Common myeloid progenitor, CD34-positive (primary cell): ENCODE measurements at regions of chr2 and their contacts with region 1.

Region 1: GRCh38 chr2:20411361-20411894 is 35.4 kb upstream of the RHOB start:
- DNase-seq: peak; percentile 64 to 84 (median 79)
- H3K4me3 ChIP-seq: no peak overlapping the region
- H3K27ac ChIP-seq: no peak overlapping the region
- H3K4me1 ChIP-seq: peaks cover 0 to 12% (median 10%) of the 10 kb centered on the region in 4 experiments
- H3K27me3 ChIP-seq: no peaks in the 10 kb centered on the region

Region 2: DNA sequence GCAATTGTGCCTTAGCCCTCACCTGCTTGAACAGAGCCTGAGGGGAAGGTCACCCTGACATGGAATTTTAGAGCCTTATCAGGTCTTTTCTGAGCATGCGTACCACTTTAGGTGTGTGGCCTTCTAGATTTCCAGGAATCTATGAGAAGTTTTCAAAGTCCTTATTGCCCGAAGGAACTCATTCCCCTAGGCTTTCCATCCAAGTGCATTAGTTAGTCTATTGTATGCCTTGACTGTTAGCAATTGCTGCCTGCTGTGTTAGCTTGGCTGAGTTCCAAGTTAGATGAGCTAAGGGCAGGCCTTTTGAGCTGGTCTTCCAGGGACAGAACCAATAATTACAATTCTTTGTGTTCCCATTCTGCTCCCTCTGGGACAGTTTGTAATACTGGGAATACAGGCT is 30.0 kb before region 1 on chr2:
- CTCF ChIA-PET with region 1: interaction called, 11 read pairs
- POLR2A ChIA-PET with region 1: no interaction called
- DNase-seq: no peak
- H3K4me3 ChIP-seq: no peak overlapping the region
- H3K27ac ChIP-seq: no peak overlapping the region
- H3K4me1 ChIP-seq: no peaks in the 10 kb centered on the region
- H3K27me3 ChIP-seq: no peaks in the 10 kb centered on the region

Region 3: DNA sequence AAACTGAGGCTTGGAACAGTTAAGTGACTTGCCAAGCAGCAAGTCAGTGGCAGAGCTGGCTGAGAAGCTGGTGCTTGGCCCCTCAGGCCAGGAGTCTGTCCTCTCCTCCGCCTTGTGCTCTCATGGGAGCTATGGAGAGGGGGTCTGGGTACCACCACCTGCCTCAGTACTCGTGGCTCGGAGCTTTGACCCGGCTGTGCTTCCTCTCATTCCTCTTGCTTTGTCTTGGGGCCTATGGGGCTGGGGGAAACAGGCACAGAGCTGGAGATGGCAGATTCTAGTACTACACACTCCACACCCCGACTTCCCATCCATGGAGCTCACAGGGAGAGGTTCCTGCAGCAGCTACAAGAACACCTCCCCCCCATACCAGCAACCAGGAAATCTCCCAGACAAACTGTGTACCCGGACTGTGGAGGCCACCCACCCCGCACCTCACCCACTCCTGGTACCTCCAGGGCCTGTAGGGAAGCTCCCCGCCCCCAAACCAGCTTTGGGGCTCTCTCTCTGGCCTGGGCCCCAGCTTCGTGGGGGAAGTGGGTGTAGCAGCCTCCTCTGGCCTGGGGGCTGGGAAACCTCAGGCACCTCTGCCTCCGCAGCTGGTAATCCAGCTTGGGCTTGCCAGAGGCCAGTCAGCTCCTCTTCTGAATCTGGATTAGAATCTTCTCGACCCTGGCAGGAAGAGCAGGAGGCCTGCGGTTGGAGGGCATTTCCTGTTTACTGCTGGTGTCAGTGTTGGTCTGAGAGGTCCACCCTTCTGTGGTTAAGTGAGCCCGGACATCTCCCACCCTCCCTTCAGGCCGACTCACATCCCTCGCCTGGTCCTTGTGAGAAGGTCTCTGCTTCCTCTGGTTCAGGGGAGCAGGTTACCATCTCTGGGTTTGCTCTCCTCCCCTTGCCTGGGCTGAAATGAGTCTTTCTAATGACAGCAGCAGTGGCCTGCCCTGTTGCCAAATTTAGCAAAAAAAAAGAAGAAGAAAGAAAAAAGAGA is 13.2 kb after region 1 on chr2:
- CTCF ChIA-PET with region 1: interaction called, 117 read pairs
- POLR2A ChIA-PET with region 1: interaction called, 4 read pairs
- DNase-seq: peak; percentile 43 to 94 (median 89)
- H3K4me3 ChIP-seq: peak overlapping the region in 4 of 7 experiments; percentile 12 to 44 (median 42)
- H3K27ac ChIP-seq: peak overlapping the region in 1 of 2 experiments; percentile 23
- H3K4me1 ChIP-seq: peaks cover 11 to 44% (median 25%) of the 10 kb centered on the region in 4 experiments
- H3K27me3 ChIP-seq: no peaks in the 10 kb centered on the region

Region 4: DNA sequence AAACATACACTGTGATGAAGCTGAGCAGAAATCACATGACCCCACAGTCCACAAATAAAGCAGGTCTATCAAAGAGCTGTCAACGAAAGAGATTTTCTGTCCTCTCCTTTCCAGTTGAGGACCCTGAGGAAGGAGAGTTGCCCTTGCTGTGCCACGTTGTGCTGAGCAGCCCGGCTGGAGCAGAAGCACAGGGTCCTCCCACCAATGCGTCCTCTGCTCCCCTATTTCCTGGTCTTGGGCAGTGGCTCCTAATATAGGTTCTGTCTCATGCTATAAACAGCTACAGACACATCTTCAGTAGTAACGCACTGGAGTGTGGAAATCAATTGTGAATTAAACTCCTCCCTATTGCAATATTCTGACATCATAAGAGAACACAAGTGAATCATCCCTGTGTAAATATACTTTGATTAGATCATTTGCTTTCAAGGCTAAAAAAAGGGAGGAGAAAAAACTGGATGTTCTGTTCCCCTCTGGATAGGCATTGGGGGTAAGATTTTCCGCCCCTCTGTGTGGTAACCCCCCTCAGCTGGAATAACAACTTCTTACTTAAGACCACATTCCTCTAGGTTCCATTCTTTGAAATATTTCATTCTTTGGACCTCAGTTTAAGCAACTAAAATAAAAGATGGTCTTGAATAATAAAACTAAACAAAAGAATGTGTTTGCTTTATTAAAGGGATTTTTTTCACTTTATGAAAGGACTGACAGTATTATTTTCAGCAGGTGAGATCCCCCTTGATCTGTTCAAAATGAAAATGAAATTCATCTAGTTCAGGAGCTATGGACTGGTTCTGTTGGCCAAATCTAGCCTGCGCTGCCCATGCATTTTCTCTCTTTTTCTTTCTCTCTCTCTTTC is 27.1 kb after region 1 on chr2:
- CTCF ChIA-PET with region 1: interaction called, 22 read pairs
- POLR2A ChIA-PET with region 1: no interaction called
- DNase-seq: no peak
- H3K4me3 ChIP-seq: no peak overlapping the region
- H3K27ac ChIP-seq: no peak overlapping the region
- H3K4me1 ChIP-seq: peaks cover 2 to 16% (median 8%) of the 10 kb centered on the region in 4 experiments
- H3K27me3 ChIP-seq: peaks cover 0 to 4% (median 0%) of the 10 kb centered on the region in 5 experiments

Region 5: GRCh38 chr2:20635675-20636584 is 224.5 kb after region 1 on chr2:
- CTCF ChIA-PET with region 1: interaction called, 20 read pairs
- POLR2A ChIA-PET with region 1: no interaction called
- DNase-seq: peak; percentile 52 to 76 (median 76)
- H3K4me3 ChIP-seq: no peak overlapping the region
- H3K27ac ChIP-seq: no peak overlapping the region
- H3K4me1 ChIP-seq: peaks cover 0 to 14% (median 2%) of the 10 kb centered on the region in 4 experiments
- H3K27me3 ChIP-seq: no peaks in the 10 kb centered on the region